ENCODE measurements at regions of chr10 and their contacts with region 1.

Region 1: GRCh38 chr10:133261726-133262325 is 14.8 kb downstream of the ADAM8 start:
- DNase-seq: peak; percentile 93
- ATAC-seq: peak; percentile 30
- H3K4me3 Mint-ChIP-seq: peak overlapping the region; percentile 74
- H3K27ac Mint-ChIP-seq: no peak overlapping the region
- H3K4me1 Mint-ChIP-seq: peaks cover 76% of the 10 kb centered on the region
- H3K27me3 Mint-ChIP-seq: no peaks in the 10 kb centered on the region

Region 2: DNA sequence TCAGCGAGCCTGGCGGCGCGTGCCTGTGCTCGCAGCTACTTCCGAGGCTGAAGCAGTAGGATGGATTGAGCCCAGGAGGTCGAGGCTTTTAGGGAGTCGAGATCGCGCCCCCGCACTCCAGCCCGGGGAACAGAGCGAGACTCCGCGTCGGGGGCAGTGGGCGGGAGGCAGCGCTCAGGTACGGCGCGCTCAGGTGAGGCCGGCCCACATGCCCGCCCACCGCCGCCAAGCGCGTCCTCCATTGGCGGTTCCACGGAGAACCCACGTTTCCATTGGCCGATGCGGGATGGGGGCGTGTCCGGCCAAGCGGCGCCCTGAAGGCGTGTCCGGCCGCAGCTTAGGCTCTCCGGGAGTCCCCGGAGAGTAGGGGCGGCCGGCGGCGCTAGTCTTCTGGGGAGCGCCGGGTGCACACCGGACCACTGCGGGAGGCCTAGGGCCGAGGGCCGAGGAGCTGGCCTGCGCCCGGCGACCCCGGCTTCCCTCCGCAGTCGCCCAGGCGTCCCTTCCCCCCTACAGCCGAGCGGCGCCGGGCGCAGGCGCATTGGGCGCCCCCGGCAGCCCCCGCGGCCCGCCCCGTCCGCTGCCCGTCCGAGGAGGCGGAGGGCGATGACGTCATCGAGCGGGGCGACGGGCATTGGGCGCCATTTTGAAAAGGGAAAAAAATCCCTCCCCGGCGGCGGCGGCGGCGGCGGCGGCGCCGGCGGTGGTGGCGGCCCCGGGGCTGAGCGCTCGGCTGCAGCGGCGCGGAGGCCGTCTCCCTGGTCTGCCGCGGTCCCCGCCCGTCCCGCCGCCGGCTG is 1361.3 kb before region 1 on chr10 and contains the start of gene PPP2R2D:
- CTCF ChIA-PET with region 1: no interaction called
- POLR2A ChIA-PET with region 1: no interaction called
- intact Hi-C with region 1: loop called in 1 of 2 experiments (anchors 10 kb)
- DNase-seq: peak; percentile 97
- ATAC-seq: peak; percentile 83
- H3K4me3 Mint-ChIP-seq: peak within 1 kb of the TSS; percentile 93
- H3K27ac Mint-ChIP-seq: peak within 1 kb of the TSS; percentile 92
- H3K4me1 Mint-ChIP-seq: peaks cover 53% of the 10 kb centered on the region
- H3K27me3 Mint-ChIP-seq: peaks cover 7% of the 10 kb centered on the region
- total RNA-seq, gene PPP2R2D: 30.0 to 39.3 TPM

Region 3: DNA sequence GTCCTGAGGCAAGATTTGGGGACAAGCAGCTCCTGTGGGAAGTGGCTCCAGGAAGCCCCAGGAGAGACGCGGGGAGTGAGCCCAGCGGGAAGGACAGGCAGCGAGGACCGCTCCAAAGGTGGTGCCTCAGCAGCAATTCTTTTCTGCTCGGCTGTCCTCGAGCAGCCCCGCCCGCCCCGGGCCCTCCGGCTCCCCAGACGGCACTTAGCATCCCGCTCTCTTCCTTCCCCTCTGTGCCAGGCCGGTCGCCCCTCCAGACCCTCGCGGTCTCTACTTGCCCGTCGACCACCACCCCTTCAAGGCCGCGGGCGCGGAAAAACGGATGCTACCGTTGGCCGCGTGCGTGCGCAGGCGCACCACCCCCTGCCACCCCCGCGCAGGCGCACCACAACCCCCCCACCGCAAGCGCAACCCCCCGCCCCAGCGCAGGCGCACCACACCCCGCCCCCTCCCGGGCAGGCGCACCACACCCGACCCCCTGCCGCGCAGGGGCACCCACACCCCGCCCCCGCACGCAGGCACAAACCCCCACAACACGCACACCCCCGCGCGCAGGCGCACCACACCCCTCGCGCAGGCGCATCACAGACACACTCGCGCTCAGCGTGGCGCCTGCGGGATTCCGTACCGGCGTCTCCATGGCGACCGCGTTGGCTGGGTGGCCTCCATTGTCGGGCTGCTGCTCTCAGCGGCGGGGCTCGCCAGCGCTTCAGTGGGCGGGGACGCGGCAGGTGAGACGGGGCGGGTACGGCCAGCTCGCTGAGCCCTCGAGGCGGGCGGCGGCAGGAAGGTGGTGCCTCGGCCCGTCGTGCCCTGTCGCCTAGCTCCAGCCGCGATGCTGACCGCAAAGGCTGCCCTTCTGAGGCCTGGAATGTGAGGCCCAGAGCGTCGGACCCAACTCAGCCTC is 930.0 kb before region 1 on chr10 and contains the start of gene LRRC27:
- CTCF ChIA-PET with region 1: no interaction called
- POLR2A ChIA-PET with region 1: no interaction called
- intact Hi-C with region 1: loop called in 1 of 2 experiments (anchors 5 kb)
- DNase-seq: peak; percentile 99
- ATAC-seq: peak; percentile 86
- H3K4me3 Mint-ChIP-seq: peak within 1 kb of the TSS; percentile 80
- H3K27ac Mint-ChIP-seq: peak within 1 kb of the TSS; percentile 81
- H3K4me1 Mint-ChIP-seq: peaks cover 56% of the 10 kb centered on the region
- H3K27me3 Mint-ChIP-seq: no peaks in the 10 kb centered on the region
- total RNA-seq, gene LRRC27: 3.6 to 4.1 TPM

Region 4: GRCh38 chr10:133110133-133110532 is 151.7 kb before region 1 on chr10:
- CTCF ChIA-PET with region 1: no interaction called
- POLR2A ChIA-PET with region 1: no interaction called
- intact Hi-C with region 1: no loop called
- DNase-seq: no peak
- ATAC-seq: no peak
- H3K4me3 Mint-ChIP-seq: no peak overlapping the region
- H3K27ac Mint-ChIP-seq: no peak overlapping the region
- H3K4me1 Mint-ChIP-seq: no peaks in the 10 kb centered on the region
- H3K27me3 Mint-ChIP-seq: no peaks in the 10 kb centered on the region

Region 5: GRCh38 chr10:133124357-133125211 is 137.2 kb before region 1 on chr10:
- CTCF ChIA-PET with region 1: no interaction called
- POLR2A ChIA-PET with region 1: no interaction called
- intact Hi-C with region 1: no loop called
- DNase-seq: peak; percentile 54
- ATAC-seq: peak; percentile 31
- H3K4me3 Mint-ChIP-seq: no peak overlapping the region
- H3K27ac Mint-ChIP-seq: no peak overlapping the region
- H3K4me1 Mint-ChIP-seq: peaks cover 8% of the 10 kb centered on the region
- H3K27me3 Mint-ChIP-seq: peaks cover 19% of the 10 kb centered on the region

Region 6: DNA sequence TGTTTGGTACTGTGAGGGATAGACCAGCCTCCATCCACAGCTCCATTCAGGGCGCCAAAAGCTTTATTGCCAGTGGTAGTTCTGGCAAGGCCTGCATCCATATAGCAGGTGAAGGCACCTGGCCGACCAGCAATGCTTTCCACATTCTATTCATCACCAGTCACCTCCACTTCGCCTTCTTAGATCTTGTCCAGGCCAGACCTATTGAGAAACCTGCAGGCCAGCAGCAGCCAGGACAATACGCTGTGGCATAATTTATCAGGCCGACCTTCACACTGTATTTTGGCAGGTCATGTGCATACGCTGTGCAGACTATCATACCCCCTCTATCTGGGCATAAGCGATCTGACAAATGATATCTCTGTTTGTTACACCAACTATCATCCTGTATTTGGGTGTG is 117.1 kb before region 1 on chr10:
- CTCF ChIA-PET with region 1: no interaction called
- POLR2A ChIA-PET with region 1: no interaction called
- intact Hi-C with region 1: loop called (anchors 1 kb)
- DNase-seq: no peak
- ATAC-seq: no peak
- H3K4me3 Mint-ChIP-seq: no peak overlapping the region
- H3K27ac Mint-ChIP-seq: no peak overlapping the region
- H3K4me1 Mint-ChIP-seq: peaks cover 7% of the 10 kb centered on the region
- H3K27me3 Mint-ChIP-seq: peaks cover 42% of the 10 kb centered on the region

Region 7: DNA sequence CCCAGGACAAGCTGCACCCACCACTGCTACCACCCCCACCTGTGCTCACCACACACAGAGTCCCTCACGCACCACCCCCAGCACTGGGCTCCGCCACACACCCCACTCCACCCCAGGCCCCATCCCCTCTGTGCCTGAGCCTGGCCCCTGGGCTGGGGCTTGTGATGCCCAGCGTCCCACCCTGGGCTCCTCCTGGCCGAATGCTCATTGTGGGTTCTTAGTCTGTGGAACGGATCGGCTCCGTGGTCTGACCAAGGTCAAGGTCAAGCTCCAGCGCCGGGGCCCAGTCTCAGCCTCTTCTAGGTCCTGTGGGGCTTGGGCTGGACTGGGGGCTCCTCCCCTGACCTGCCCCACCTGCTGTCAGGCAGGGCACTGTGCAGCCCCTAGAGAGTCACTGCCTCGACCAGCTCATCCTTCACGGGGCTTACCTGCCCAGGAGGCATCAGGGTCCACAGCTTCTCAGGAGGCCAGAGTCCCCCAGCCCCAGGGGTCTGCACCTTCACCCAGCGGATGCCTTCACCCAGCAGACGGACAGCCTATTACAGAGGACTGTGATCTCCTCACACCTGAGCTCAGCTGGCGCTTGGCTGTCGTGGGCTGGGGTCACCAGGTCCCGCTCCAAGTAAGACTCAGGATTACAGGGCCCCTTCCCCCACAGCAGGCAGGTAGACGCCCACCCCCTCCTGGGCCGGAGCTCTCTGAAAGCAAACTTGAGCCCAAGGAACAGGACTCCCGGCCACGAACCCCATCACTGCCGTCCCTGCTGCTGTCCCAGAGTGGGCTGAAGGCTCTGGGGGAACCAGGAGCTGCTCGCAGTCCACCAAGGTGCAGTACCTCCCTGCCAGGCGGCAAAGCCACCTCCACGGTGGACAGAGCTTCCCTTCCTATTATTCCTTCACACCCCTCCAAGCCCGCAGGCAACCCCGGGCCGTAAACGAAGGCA is 47.1 kb before region 1 on chr10:
- CTCF ChIA-PET with region 1: no interaction called
- POLR2A ChIA-PET with region 1: no interaction called
- intact Hi-C with region 1: no loop called
- DNase-seq: no peak
- ATAC-seq: no peak
- H3K4me3 Mint-ChIP-seq: no peak overlapping the region
- H3K27ac Mint-ChIP-seq: no peak overlapping the region
- H3K4me1 Mint-ChIP-seq: peaks cover 4% of the 10 kb centered on the region
- H3K27me3 Mint-ChIP-seq: no peaks in the 10 kb centered on the region

Region 8: GRCh38 chr10:133357285-133358151 is 95.7 kb after region 1 on chr10 and contains the start of gene FUOM:
- CTCF ChIA-PET with region 1: no interaction called
- POLR2A ChIA-PET with region 1: no interaction called
- intact Hi-C with region 1: loop called in 1 of 2 experiments (anchors 1 kb)
- DNase-seq: peak; percentile 87
- ATAC-seq: peak; percentile 92
- H3K4me3 Mint-ChIP-seq: peak within 1 kb of the TSS; percentile 77
- H3K27ac Mint-ChIP-seq: peak within 1 kb of the TSS; percentile 60
- H3K4me1 Mint-ChIP-seq: peaks cover 7% of the 10 kb centered on the region
- H3K27me3 Mint-ChIP-seq: no peaks in the 10 kb centered on the region
- total RNA-seq, gene FUOM: 28.3 to 37.0 TPM

Region 9: DNA sequence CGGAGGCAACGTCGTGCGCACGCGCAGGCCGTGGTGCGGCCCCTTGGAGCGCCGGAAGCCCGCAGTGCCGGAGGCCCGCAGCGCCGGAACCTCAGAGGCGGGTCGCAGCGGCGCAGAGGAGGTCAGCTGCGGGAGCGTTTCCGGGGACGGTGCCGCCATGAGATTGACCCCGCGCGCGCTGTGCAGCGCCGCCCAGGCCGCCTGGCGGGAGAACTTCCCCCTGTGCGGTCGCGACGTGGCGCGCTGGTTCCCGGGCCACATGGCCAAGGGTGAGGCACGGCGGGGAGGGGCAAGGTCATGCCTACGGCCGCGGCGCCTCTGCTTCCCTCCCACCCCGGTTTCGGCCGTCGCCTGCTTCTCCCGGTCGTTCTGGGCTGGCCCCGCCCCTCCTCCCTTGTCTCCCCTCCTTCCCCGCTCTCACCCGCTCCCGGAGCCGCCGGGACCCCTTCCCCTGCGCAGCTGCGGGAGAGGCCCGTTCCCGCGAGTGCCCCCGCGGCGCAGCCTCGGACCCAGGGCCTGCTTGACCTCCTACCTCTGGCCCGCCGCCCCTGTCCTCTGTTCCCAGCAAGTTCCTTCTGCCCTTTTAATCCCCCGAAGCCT is 132.3 kb after region 1 on chr10 and contains the start of gene MTG1:
- CTCF ChIA-PET with region 1: no interaction called
- POLR2A ChIA-PET with region 1: no interaction called
- intact Hi-C with region 1: loop called (anchors 1 to 5 kb)
- DNase-seq: peak; percentile 97
- ATAC-seq: peak; percentile 76
- H3K4me3 Mint-ChIP-seq: peak within 1 kb of the TSS; percentile 90
- H3K27ac Mint-ChIP-seq: peak within 1 kb of the TSS; percentile 93
- H3K4me1 Mint-ChIP-seq: peaks cover 51% of the 10 kb centered on the region
- H3K27me3 Mint-ChIP-seq: no peaks in the 10 kb centered on the region
- total RNA-seq, gene MTG1: 46.9 to 52.1 TPM

Region 10: DNA sequence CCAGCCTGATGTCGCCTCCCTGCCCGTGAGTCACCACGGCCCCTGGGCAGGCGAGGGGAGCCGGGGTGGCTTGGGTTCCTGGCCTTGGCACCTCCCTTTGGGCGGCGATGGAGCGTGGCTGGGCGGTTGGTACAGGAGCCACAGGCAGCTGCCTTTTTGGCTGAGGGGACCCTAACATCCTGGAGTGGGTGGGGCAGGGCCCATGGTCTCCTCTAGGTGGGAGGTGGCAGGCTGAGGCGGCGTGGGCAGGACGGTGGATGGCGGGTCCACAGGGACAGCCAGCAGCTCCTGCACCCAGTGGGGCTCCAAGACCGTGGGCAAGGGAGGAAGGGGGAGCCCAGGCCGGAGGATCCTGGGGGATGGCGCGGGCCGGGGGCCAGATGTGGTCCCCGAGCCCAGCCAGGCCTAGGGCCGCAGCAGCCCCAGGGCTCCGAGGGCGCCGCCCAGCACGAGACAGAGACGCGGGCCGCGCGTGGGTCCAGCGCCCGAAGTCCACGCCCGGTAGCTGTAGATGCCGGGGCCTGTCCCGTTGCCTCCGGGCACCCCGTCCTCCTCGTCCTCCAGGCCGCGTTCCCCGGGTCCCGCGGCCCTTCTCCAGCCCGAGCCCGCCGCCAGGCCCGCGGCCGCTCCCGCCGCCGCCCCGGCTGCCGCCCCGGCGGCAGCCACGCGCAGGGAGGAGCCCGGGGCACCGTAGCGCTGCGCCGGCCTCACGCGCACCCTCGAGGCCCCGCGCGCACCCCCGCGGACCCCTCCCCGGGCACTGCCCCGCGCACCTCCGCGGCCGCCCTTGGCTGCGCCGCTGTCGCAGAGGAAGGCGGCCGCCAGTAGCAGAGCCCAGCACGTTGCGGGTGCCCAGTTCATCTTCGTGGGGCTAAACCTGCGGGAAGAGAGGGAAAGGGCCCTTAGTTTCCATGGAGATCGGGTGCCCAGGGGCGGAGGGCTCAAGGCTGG is 161.3 kb after region 1 on chr10:
- CTCF ChIA-PET with region 1: no interaction called
- POLR2A ChIA-PET with region 1: no interaction called
- intact Hi-C with region 1: no loop called
- DNase-seq: no peak
- ATAC-seq: peak; percentile 43
- H3K4me3 Mint-ChIP-seq: no peak overlapping the region
- H3K27ac Mint-ChIP-seq: no peak overlapping the region
- H3K4me1 Mint-ChIP-seq: no peaks in the 10 kb centered on the region
- H3K27me3 Mint-ChIP-seq: peaks cover 2% of the 10 kb centered on the region

Measured in activated CD4-positive, alpha-beta T cell treated with anti-CD3 and anti-CD28 coated beads for 36 hours (primary cell).